ENCODE measurements at regions of chr3 and their contacts with region 1.

Region 1: GRCh38 chr3:194871143-194871863 is 185.6 kb downstream of the FAM43A start:
- DNase-seq: peak; percentile 50 to 78 (median 73)
- ATAC-seq: peak; percentile 57 to 76 (median 66)
- H3K4me3 ChIP-seq: no peak overlapping the region
- H3K27ac ChIP-seq: peak overlapping the region in 11 of 12 donors; percentile 44 to 82 (median 70)
- H3K4me1 ChIP-seq: peaks cover 5 to 55% (median 36%) of the 10 kb centered on the region in 12 donors
- H3K27me3 ChIP-seq: no peaks in the 10 kb centered on the region
- CTCF ChIP-seq: no peak
- POLR2A ChIP-seq: no peak

Region 2: GRCh38 chr3:194769020-194769643 is 102.2 kb before region 1 on chr3:
- intact Hi-C with region 1: loop called in 1 of 10 experiments (anchors 5 kb)
- DNase-seq: peak; percentile 91 to 97 (median 92)
- ATAC-seq: peak; percentile 98 to 99 (median 99)
- H3K4me3 ChIP-seq: peak overlapping the region in 10 of 12 donors; percentile 26 to 60 (median 45)
- H3K27ac ChIP-seq: peak overlapping the region in 10 of 12 donors; percentile 6 to 66 (median 49)
- H3K4me1 ChIP-seq: peaks cover 0 to 45% (median 18%) of the 10 kb centered on the region in 12 donors
- H3K27me3 ChIP-seq: no peaks in the 10 kb centered on the region
- CTCF ChIP-seq: peak in 1 of 12 donors; percentile 4
- POLR2A ChIP-seq: no peak

Region 3: GRCh38 chr3:194782698-194783404 is 88.5 kb before region 1 on chr3:
- intact Hi-C with region 1: loop called in 2 of 10 experiments (anchors 10 kb)
- DNase-seq: no peak
- ATAC-seq: peak; percentile 34 to 61 (median 55)
- H3K4me3 ChIP-seq: no peak overlapping the region
- H3K27ac ChIP-seq: peak overlapping the region in 7 of 12 donors; percentile 2 to 72 (median 31)
- H3K4me1 ChIP-seq: peaks cover 0 to 37% (median 22%) of the 10 kb centered on the region in 12 donors
- H3K27me3 ChIP-seq: no peaks in the 10 kb centered on the region
- CTCF ChIP-seq: no peak
- POLR2A ChIP-seq: no peak

Region 4: GRCh38 chr3:194824701-194825111 is 46.6 kb before region 1 on chr3:
- intact Hi-C with region 1: loop called in 2 of 10 experiments (anchors 2 to 5 kb)
- DNase-seq: peak; percentile 76 to 88 (median 86)
- ATAC-seq: peak; percentile 95 to 99 (median 98)
- H3K4me3 ChIP-seq: peak overlapping the region in 3 of 12 donors; percentile 10 to 27 (median 25)
- H3K27ac ChIP-seq: peak overlapping the region in 11 of 12 donors; percentile 22 to 91 (median 81)
- H3K4me1 ChIP-seq: peaks cover 3 to 28% (median 19%) of the 10 kb centered on the region in 12 donors
- H3K27me3 ChIP-seq: no peaks in the 10 kb centered on the region
- CTCF ChIP-seq: no peak
- POLR2A ChIP-seq: no peak

Region 5: DNA sequence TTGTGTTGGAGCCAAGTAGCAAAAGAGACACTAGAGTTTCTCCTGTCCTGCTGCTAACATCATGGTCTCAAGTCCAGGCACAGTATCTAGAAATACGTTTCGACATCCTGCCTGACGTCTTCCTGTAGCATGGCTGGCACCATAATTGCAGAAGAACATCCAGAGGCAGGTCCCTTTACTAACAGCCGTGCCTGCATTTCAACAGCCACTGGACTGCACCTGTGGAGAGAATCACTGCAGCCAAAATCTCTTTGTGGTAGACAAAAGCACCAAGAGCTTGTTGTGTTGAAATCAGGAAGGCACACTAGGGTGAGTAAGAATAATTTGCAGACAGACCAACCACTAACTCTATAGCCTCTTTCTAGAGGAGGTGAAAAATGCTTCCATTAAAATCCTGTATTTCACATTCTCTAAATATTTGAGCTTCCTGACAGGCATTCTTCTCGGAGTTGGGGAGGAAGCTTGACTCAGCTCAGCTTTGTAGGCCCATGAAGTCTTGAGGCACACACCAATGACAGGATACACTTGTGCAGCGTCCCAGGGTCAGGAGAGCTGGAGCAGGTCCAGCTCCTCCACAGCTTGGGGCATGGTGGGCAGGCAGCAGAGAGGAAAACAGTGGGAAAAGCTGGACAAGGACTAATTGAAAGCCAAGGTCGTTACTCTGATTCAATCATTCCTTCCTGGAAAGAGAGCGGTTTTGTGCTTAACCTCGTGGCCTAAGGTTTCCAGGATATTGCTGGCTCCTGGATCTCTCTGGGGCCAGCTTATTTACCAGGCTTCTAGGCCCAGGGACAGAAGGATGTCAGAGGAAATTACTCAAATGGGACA is 59.3 kb after region 1 on chr3:
- intact Hi-C with region 1: loop called in 2 of 10 experiments (anchors 5 kb)
- DNase-seq: peak in 4 of 5 donors; percentile 49 to 70 (median 58)
- ATAC-seq: peak; percentile 62 to 86 (median 78)
- H3K4me3 ChIP-seq: no peak overlapping the region
- H3K27ac ChIP-seq: peak overlapping the region; percentile 56 to 89 (median 74)
- H3K4me1 ChIP-seq: peaks cover 12 to 58% (median 32%) of the 10 kb centered on the region in 12 donors
- H3K27me3 ChIP-seq: no peaks in the 10 kb centered on the region
- CTCF ChIP-seq: no peak
- POLR2A ChIP-seq: no peak

Region 6: GRCh38 chr3:195286115-195286872 is 415.0 kb after region 1 on chr3:
- intact Hi-C with region 1: no loop called
- DNase-seq: no peak
- ATAC-seq: no peak
- H3K4me3 ChIP-seq: no peak overlapping the region
- H3K27ac ChIP-seq: no peak overlapping the region
- H3K4me1 ChIP-seq: no peaks in the 10 kb centered on the region
- H3K27me3 ChIP-seq: no peaks in the 10 kb centered on the region
- CTCF ChIP-seq: no peak
- POLR2A ChIP-seq: no peak